Dendritic cell treated with granulocyte-macrophage colony-stimulating factor and Interleukin-4, amounts not matched to agents 40 ng/mL and 50 ng/mL, for 4 days (primary cell): ENCODE measurements at regions of chrX and their contacts with region 1.

Region 1: DNA sequence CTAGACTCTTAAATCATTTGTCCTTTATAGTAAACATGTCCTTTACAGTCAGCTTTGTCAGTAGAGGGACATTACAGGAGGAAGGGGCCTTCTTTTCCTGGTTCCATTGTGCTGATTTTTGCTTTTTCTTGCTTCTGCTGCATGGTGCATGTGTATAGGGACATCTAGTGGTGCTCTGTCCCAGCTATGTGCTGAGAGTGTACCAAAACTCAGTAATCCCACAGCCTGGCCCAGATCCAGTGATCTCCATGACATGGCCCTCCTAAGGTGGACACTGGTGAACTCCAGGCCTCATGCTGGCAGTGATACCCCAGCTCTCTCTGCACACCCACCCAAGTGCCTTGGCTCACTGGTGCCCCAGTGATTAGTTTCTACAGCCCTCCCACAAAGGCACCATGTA is 45.2 kb downstream of the MAGEB17 start:
- H3K4me3 Mint-ChIP-seq: no peak overlapping the region
- H3K27ac Mint-ChIP-seq: no peak overlapping the region
- H3K4me1 Mint-ChIP-seq: no peaks in the 10 kb centered on the region
- H3K27me3 Mint-ChIP-seq: no peaks in the 10 kb centered on the region

Region 2: DNA sequence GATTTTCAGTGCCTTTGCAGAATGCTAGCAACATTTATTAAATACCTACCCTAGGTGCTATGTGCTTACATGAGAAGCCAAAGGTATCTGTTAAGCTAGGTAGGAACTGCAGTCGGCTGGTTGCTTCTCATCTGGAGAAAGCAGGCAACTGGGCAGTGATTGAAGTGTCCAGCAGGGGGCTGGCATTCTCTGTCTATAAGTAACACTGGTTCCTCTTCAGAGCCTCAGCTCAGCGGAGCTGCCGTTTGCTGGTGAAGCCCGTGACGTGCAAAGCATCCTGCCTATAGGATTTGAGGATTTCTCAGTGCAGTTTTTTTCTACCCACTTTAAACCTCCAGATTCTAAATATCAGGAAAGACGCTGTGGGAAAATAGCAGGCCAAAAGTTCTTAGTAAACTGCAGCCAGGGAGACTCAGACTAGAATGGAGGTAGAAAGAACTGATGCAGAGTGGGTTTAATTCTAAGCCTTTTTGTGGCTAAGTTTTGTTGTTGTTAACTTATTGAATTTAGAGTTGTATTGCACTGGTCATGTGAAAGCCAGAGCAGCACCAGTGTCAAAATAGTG is 89.1 kb before region 1 on chrX and contains the start of gene GRPR:
- intact Hi-C with region 1: loop called (anchors 5 kb)
- H3K4me3 Mint-ChIP-seq: no peak within 1 kb of the TSS
- H3K27ac Mint-ChIP-seq: no peak within 1 kb of the TSS
- H3K4me1 Mint-ChIP-seq: peaks cover 14% of the 10 kb centered on the region
- H3K27me3 Mint-ChIP-seq: peaks cover 5% of the 10 kb centered on the region

Region 3: DNA sequence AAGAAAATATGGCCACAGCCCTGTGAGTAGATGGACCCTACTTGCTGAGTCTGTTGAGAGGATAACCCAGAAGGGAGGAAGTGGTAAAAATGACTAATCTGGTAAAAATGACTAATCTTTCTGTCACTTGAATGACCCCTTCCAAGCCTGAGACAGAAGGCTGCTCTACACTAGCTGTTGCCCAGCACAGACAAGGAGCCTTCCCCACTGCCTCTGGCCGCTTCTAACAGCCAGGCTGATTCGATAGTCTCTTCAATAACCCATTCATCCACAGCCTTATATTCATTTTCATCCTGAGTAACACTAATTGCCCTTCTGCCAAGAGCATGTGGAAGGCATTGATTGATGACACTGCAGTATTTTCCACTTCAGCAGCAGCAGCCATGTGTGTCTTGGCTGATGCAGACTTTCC is 26.7 kb before region 1 on chrX:
- intact Hi-C with region 1: no loop called
- H3K4me3 Mint-ChIP-seq: no peak overlapping the region
- H3K27ac Mint-ChIP-seq: peak overlapping the region; percentile 30
- H3K4me1 Mint-ChIP-seq: peaks cover 30% of the 10 kb centered on the region
- H3K27me3 Mint-ChIP-seq: peaks cover 6% of the 10 kb centered on the region